Activated CD4-positive, alpha-beta T cell treated with anti-CD3 and anti-CD28 coated beads for 36 hours (primary cell): ENCODE measurements at regions of chr4 and their contacts with region 1.

Region 1: GRCh38 chr4:55948726-55949474 is at the start of gene CEP135:
- DNase-seq: peak; percentile 96
- ATAC-seq: peak; percentile 81
- H3K4me3 Mint-ChIP-seq: peak within 1 kb of the TSS; percentile 79
- H3K27ac Mint-ChIP-seq: peak within 1 kb of the TSS; percentile 94
- H3K4me1 Mint-ChIP-seq: peaks cover 37% of the 10 kb centered on the region
- H3K27me3 Mint-ChIP-seq: no peaks in the 10 kb centered on the region
- total RNA-seq, gene CEP135: 17.0 to 17.5 TPM

Region 2: GRCh38 chr4:55345980-55346850 is 602.7 kb before region 1 on chr4 and contains the start of gene SRD5A3:
- CTCF ChIA-PET with region 1: interaction called, 8 read pairs
- POLR2A ChIA-PET with region 1: no interaction called
- intact Hi-C with region 1: loop called in 1 of 2 experiments (anchors 2 kb)
- DNase-seq: peak; percentile 89
- ATAC-seq: peak; percentile 89
- H3K4me3 Mint-ChIP-seq: peak within 1 kb of the TSS; percentile 82
- H3K27ac Mint-ChIP-seq: peak within 1 kb of the TSS; percentile 90
- H3K4me1 Mint-ChIP-seq: peaks cover 25% of the 10 kb centered on the region
- H3K27me3 Mint-ChIP-seq: no peaks in the 10 kb centered on the region
- total RNA-seq, gene SRD5A3: 20.5 to 24.6 TPM

Region 3: GRCh38 chr4:55673424-55673823 is 275.5 kb before region 1 on chr4:
- CTCF ChIA-PET with region 1: no interaction called
- POLR2A ChIA-PET with region 1: no interaction called
- intact Hi-C with region 1: no loop called
- DNase-seq: no peak
- ATAC-seq: no peak
- H3K4me3 Mint-ChIP-seq: no peak overlapping the region
- H3K27ac Mint-ChIP-seq: no peak overlapping the region
- H3K4me1 Mint-ChIP-seq: no peaks in the 10 kb centered on the region
- H3K27me3 Mint-ChIP-seq: peaks cover 27% of the 10 kb centered on the region

Region 4: DNA sequence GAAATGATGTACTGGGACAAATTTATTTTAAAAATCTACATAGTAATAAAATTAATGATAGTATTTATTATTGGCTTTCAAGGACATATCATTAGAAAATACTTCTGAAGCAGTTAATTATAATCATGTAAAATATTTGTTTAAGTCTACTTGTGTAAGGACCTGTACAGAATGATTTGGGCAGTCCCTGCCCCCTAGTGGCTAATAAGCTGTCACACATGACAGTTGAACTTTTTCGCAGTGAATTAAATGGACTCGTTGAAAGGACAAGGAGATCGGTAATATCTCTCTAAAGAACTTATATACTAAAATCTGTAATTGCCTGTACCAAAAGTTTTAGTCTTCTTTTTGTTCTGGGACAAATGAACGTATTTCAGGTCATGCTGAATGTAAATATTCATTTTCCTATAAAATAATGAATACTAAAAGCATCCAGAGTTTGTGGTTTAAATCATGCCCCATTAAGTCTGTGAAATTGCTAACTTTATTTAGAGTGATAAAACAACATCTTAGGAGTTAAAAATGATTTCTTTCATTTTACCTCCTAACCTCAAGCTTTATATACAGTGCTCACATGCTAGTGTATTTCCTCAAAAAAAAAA is 81.8 kb before region 1 on chr4:
- CTCF ChIA-PET with region 1: interaction called, 10 read pairs
- POLR2A ChIA-PET with region 1: no interaction called
- intact Hi-C with region 1: no loop called
- DNase-seq: peak; percentile 20
- ATAC-seq: peak; percentile 62
- H3K4me3 Mint-ChIP-seq: no peak overlapping the region
- H3K27ac Mint-ChIP-seq: no peak overlapping the region
- H3K4me1 Mint-ChIP-seq: peaks cover 20% of the 10 kb centered on the region
- H3K27me3 Mint-ChIP-seq: no peaks in the 10 kb centered on the region

Region 5: DNA sequence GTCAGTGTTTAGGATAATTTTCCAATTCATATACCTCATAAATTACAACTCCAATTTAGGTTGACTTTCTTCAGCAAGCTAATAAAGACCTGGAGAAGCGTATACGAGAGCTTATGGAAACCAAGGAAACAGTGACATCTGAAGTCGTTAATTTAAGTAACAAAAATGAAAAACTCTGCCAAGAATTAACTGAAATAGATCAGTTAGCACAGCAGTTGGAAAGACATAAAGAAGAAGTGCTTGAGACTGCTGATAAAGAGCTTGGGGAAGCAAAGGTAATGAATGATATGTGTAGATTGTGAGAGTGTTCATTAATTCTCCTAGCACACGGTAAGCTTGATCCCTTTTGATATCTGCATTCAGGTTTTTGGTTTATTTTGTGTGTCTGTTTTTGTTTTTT is 16.7 kb after region 1 on chr4:
- CTCF ChIA-PET with region 1: interaction called, 12 read pairs
- POLR2A ChIA-PET with region 1: interaction called, 4 read pairs
- intact Hi-C with region 1: no loop called
- DNase-seq: no peak
- ATAC-seq: no peak
- H3K4me3 Mint-ChIP-seq: no peak overlapping the region
- H3K27ac Mint-ChIP-seq: no peak overlapping the region
- H3K4me1 Mint-ChIP-seq: no peaks in the 10 kb centered on the region
- H3K27me3 Mint-ChIP-seq: no peaks in the 10 kb centered on the region

Region 6: GRCh38 chr4:56387023-56388001 is 438.4 kb after region 1 on chr4 and contains the start of gene AASDH:
- CTCF ChIA-PET with region 1: interaction called, 4 read pairs
- POLR2A ChIA-PET with region 1: interaction called, 20 read pairs
- intact Hi-C with region 1: loop called (anchors 1 to 5 kb)
- DNase-seq: peak; percentile 97
- ATAC-seq: peak; percentile 94
- H3K4me3 Mint-ChIP-seq: peak within 1 kb of the TSS; percentile 98
- H3K27ac Mint-ChIP-seq: peak within 1 kb of the TSS; percentile 100
- H3K4me1 Mint-ChIP-seq: peaks cover 31% of the 10 kb centered on the region
- H3K27me3 Mint-ChIP-seq: no peaks in the 10 kb centered on the region
- total RNA-seq, gene AASDH: 13.3 to 16.4 TPM

Region 7: DNA sequence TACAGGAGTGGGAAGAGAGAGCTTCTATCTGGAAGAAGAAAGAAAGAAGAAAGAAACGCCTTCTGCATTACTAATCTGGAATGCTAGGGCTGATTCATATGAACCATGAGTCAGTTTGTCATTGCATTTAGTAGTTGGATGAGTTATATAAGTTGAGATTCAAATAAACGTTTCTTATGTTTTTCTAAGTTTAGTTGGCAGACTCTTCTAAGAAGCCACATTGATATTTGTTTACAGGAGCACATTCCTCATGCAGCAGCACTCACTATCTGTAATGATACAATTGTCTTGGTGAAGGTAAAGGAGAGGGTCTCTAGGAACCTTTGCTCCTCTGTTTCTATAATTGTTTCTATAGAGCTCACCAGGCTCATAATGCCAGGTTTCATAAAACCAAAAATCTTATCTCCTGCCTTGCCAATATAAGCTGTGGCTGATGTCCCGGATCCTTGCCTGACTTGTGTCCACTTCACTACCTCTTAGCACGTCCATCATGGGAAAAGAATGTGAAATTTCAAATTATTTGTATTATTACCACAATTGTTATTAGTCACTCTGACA is 692.7 kb after region 1 on chr4:
- CTCF ChIA-PET with region 1: no interaction called
- POLR2A ChIA-PET with region 1: no interaction called
- intact Hi-C with region 1: loop called in 1 of 2 experiments (anchors 10 kb)
- DNase-seq: no peak
- ATAC-seq: peak; percentile 80
- H3K4me3 Mint-ChIP-seq: no peak overlapping the region
- H3K27ac Mint-ChIP-seq: peak overlapping the region; percentile 82
- H3K4me1 Mint-ChIP-seq: peaks cover 36% of the 10 kb centered on the region
- H3K27me3 Mint-ChIP-seq: no peaks in the 10 kb centered on the region